ENCODE measurements at regions of chr17 and their contacts with region 1.

Region 1: DNA sequence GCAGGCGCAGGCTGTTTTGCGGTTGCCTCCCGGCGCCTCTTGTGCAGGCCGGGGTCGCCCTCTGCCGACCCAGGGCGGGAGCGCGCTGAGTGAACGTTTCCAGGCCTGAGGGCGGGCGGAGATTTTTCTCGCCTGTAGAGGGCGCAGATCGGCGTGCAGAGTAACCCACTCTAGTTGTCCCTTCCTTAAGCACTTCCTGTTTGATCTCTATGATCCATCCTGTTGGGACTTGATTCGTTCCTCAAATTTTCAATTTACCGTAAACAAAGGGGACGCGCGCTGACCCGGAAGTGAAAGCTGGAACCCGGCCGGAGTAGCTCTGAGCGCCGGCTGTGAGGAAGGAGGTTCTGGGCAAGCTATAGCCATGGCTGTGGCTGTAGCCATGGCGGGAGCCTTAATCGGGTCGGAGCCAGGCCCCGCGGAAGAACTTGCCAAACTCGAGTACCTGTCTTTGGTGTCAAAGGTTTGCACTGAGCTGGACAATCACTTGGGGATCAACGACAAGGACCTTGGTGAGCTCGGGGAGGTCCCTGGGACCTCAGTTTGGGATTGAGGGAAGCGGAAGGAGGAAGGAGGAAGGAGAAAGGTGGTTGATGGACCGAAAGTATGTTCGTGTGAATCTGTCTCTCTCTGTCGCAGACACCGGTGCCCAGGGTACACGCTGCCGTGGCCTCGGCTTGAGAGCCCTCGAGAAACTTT is at the start of gene DHX8:
- DNase-seq: peak; percentile 97
- ATAC-seq: peak; percentile 99
- total RNA-seq, gene DHX8: 27.1 to 35.2 TPM

Region 2: GRCh38 chr17:43393944-43394482 is 89.8 kb before region 1 on chr17:
- intact Hi-C with region 1: loop called (anchors 1 to 2 kb)
- DNase-seq: peak; percentile 89
- ATAC-seq: peak; percentile 42 to 58

Region 3: GRCh38 chr17:43406676-43407645 is 76.9 kb before region 1 on chr17:
- intact Hi-C with region 1: no loop called
- DNase-seq: no peak
- ATAC-seq: peak in 1 of 2 donors; percentile 52

Region 4: GRCh38 chr17:43530278-43531081 is 46.7 kb after region 1 on chr17:
- intact Hi-C with region 1: no loop called
- DNase-seq: peak; percentile 87
- ATAC-seq: peak; percentile 80 to 87

Measured in left cardiac atrium (tissue), 4 donors.